ENCODE measurements at regions of chr11 and their contacts with region 1.

Region 1: GRCh38 chr11:123640677-123641494 is 13.5 kb downstream of the SCN3B start:
- DNase-seq: peak; percentile 77
- ATAC-seq: peak; percentile 93
- H3K4me3 Mint-ChIP-seq: no peak overlapping the region
- H3K27ac Mint-ChIP-seq: no peak overlapping the region
- H3K4me1 Mint-ChIP-seq: peaks cover 31% of the 10 kb centered on the region
- H3K27me3 Mint-ChIP-seq: no peaks in the 10 kb centered on the region; the same call in 1 of the 2 replicates
- CTCF ChIP-seq: peak; percentile 84

Region 2: GRCh38 chr11:123628936-123629683 is 11.8 kb before region 1 on chr11:
- CTCF ChIA-PET with region 1: interaction called, 10 read pairs
- POLR2A ChIA-PET with region 1: no interaction called
- DNase-seq: no peak
- ATAC-seq: peak; percentile 39; the same call in 1 of the 2 replicates
- H3K4me3 Mint-ChIP-seq: no peak overlapping the region
- H3K27ac Mint-ChIP-seq: no peak overlapping the region
- H3K4me1 Mint-ChIP-seq: 0 out of 2 replicates have a peak, but pooled peaks cover 3% of the 10 kb centered on the region
- H3K27me3 Mint-ChIP-seq: no peaks in the 10 kb centered on the region; the same call in 1 of the 2 replicates
- CTCF ChIP-seq: no peak

Measured in WTC11 (cell line).